ENCODE measurements at regions of chr3 and their contacts with region 1.

Region 1: DNA sequence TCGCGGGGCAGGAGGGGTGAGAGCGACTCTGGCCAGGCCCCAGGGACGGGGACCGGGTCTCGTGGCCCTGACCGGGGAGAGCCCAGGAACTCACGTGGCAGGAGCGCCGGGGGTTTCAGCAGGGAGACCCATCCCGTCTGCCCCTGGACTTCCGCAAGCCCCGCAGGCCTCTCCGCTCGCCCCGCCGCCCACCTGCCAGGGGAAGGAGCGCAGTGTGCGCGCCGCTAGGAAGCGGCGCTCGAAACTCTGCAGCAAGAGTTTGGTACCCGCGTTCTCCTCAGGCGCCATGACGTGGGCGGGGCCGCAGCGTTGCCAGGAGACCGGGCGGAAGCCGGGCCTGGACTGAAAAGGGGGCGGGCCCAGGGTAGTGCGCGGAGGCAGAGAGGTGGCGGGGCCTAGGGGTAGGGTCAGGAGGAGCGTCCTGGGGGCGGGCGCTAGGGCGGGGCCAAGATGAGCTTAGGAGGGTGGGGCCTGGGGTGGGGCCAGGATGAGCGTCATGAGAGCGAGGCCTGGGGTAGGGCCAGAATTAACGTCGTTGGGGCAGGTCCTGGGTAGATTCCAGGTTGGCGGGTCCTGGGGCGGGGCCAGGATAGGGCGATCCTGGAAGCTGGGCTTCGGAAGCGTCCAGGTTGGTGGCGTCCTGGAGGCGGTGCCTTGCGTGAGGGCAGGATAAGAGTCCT is 29.7 kb downstream of the ALG1L2 start:
- DNase-seq: peak; percentile 90
- ATAC-seq: peak; percentile 100
- H3K4me3 ChIP-seq: peak overlapping the region; percentile 77 to 81
- H3K27ac ChIP-seq: peak overlapping the region; percentile 77
- H3K4me1 ChIP-seq: no peaks in the 10 kb centered on the region
- H3K27me3 ChIP-seq: no peaks in the 10 kb centered on the region
- CTCF ChIP-seq: no peak

Region 2: GRCh38 chr3:129650256-129650872 is 461.0 kb before region 1 on chr3:
- CTCF ChIA-PET with region 1: no interaction called
- POLR2A ChIA-PET with region 1: no interaction called
- in situ Hi-C with region 1: no loop called
- intact Hi-C with region 1: no loop called
- DNase-seq: peak; percentile 52
- ATAC-seq: peak; percentile 81
- H3K4me3 ChIP-seq: no peak overlapping the region
- H3K27ac ChIP-seq: no peak overlapping the region
- H3K4me1 ChIP-seq: peaks cover 20% of the 10 kb centered on the region
- H3K27me3 ChIP-seq: no peaks in the 10 kb centered on the region
- CTCF ChIP-seq: peak; percentile 89

Region 3: DNA sequence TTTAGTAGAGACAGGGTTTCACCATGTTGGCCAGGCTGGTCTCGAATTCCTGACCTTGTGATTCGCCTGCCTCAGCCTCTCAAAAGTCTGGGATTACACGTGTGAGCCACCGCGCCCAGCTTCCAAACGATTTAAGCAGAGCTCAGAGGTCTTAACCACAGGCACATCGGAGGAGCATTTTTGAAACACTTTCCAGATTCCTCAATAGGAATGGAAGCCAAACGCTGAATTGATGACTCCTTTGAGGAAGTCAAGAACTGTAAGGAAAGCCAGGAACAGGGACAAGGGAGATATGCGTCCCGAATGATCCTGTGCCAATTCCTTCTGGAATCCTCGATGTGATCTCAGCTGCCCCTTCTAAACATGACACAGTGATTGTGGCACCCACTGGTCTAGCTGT is 96.8 kb before region 1 on chr3:
- CTCF ChIA-PET with region 1: no interaction called
- POLR2A ChIA-PET with region 1: no interaction called
- in situ Hi-C with region 1: no loop called
- intact Hi-C with region 1: loop called (anchors 10 kb)
- DNase-seq: no peak
- ATAC-seq: no peak
- H3K4me3 ChIP-seq: no peak overlapping the region
- H3K27ac ChIP-seq: no peak overlapping the region
- H3K4me1 ChIP-seq: no peaks in the 10 kb centered on the region
- H3K27me3 ChIP-seq: peaks cover 8% of the 10 kb centered on the region; the same call in 1 of the 2 replicates
- CTCF ChIP-seq: no peak

Measured in Panc1 (cell line).